ENCODE measurements at regions of chr14 and their contacts with region 1.

Region 1: GRCh38 chr14:105568859-105569708 is 42.7 kb downstream of the TMEM121 start:
- DNase-seq: no peak
- ATAC-seq: no peak
- H3K4me3 Mint-ChIP-seq: no peak overlapping the region
- H3K27ac Mint-ChIP-seq: no peak overlapping the region
- H3K4me1 Mint-ChIP-seq: no peaks in the 10 kb centered on the region
- H3K27me3 Mint-ChIP-seq: no peaks in the 10 kb centered on the region

Region 2: GRCh38 chr14:104855532-104856090 is 713.5 kb before region 1 on chr14:
- CTCF ChIA-PET with region 1: no interaction called
- POLR2A ChIA-PET with region 1: no interaction called
- intact Hi-C with region 1: no loop called
- DNase-seq: no peak
- ATAC-seq: no peak
- H3K4me3 Mint-ChIP-seq: no peak overlapping the region
- H3K27ac Mint-ChIP-seq: no peak overlapping the region
- H3K4me1 Mint-ChIP-seq: no peaks in the 10 kb centered on the region
- H3K27me3 Mint-ChIP-seq: peaks cover 8% of the 10 kb centered on the region

Region 3: GRCh38 chr14:105605084-105605820 is 36.2 kb after region 1 on chr14:
- CTCF ChIA-PET with region 1: no interaction called
- POLR2A ChIA-PET with region 1: no interaction called
- intact Hi-C with region 1: no loop called
- DNase-seq: no peak
- ATAC-seq: no peak
- H3K4me3 Mint-ChIP-seq: no peak overlapping the region
- H3K27ac Mint-ChIP-seq: no peak overlapping the region
- H3K4me1 Mint-ChIP-seq: no peaks in the 10 kb centered on the region
- H3K27me3 Mint-ChIP-seq: no peaks in the 10 kb centered on the region

Region 4: GRCh38 chr14:105689728-105690127 is 120.6 kb after region 1 on chr14:
- CTCF ChIA-PET with region 1: no interaction called
- POLR2A ChIA-PET with region 1: no interaction called
- intact Hi-C with region 1: loop called in 1 of 2 experiments (anchors 2 kb)
- DNase-seq: no peak
- ATAC-seq: no peak
- H3K4me3 Mint-ChIP-seq: no peak overlapping the region
- H3K27ac Mint-ChIP-seq: no peak overlapping the region
- H3K4me1 Mint-ChIP-seq: no peaks in the 10 kb centered on the region
- H3K27me3 Mint-ChIP-seq: peaks cover 11% of the 10 kb centered on the region

Region 5: GRCh38 chr14:105989566-105990302 is 420.6 kb after region 1 on chr14:
- CTCF ChIA-PET with region 1: no interaction called
- POLR2A ChIA-PET with region 1: no interaction called
- intact Hi-C with region 1: no loop called
- DNase-seq: peak; percentile 75
- ATAC-seq: peak; percentile 67
- H3K4me3 Mint-ChIP-seq: no peak overlapping the region
- H3K27ac Mint-ChIP-seq: peak overlapping the region; percentile 85
- H3K4me1 Mint-ChIP-seq: peaks cover 58% of the 10 kb centered on the region
- H3K27me3 Mint-ChIP-seq: no peaks in the 10 kb centered on the region